ENCODE measurements at regions of chr17 and their contacts with region 1.

Region 1: GRCh38 chr17:49997791-49998703 is 3.0 kb upstream of the DLX3 start:
- DNase-seq: peak; percentile 95
- H3K4me3 Mint-ChIP-seq: peak overlapping the region; percentile 57
- H3K27ac Mint-ChIP-seq: no peak overlapping the region
- H3K4me1 Mint-ChIP-seq: peaks cover 33% of the 10 kb centered on the region
- H3K27me3 Mint-ChIP-seq: peaks cover 84% of the 10 kb centered on the region
- CTCF ChIP-seq: peak; percentile 98

Region 2: DNA sequence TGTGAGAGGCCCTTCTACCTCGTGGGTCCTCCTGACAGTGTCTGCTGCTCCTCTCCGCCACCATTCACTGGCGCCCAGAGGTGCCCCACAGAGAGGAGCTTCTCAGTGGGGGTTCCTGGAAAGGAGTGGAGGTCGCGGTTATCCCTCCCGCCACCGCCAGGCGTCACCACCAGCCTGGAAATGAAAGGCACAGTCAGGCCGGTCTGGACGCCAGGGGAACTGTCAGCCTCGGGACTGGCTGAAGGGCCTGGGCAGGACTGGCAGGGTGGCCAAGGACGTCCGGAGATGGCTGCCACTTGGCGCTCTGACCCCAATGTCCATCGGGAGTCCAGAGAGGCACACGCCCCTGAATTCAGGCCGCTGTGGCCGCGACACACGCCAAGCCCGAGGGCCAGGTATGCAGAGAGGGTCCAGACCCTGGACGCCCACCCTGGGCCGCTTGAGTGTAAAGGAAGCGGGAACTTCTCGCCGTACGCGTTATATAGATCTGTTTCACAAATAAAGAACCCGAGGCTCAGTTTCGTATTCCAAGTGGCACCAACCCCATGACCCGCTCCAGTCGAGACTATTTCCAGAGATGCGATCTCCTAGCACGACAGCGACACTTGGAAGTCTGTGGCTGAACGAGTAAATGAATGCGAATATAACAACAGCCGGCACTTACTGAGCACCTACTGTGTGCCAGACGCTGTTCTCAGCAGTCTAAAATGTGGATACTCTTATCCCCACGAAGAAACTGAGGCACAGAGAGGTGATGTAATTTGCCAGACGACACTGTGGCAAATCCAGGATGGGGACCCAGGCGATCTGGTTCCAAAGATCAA is 430.0 kb before region 1 on chr17:
- CTCF ChIA-PET with region 1: interaction called, 8 read pairs
- intact Hi-C with region 1: loop called (anchors 5 kb)
- DNase-seq: peak; percentile 98
- H3K4me3 Mint-ChIP-seq: peak overlapping the region; percentile 68
- H3K27ac Mint-ChIP-seq: no peak overlapping the region
- H3K4me1 Mint-ChIP-seq: peaks cover 14% of the 10 kb centered on the region
- H3K27me3 Mint-ChIP-seq: peaks cover 64% of the 10 kb centered on the region
- CTCF ChIP-seq: peak; percentile 98

Region 3: DNA sequence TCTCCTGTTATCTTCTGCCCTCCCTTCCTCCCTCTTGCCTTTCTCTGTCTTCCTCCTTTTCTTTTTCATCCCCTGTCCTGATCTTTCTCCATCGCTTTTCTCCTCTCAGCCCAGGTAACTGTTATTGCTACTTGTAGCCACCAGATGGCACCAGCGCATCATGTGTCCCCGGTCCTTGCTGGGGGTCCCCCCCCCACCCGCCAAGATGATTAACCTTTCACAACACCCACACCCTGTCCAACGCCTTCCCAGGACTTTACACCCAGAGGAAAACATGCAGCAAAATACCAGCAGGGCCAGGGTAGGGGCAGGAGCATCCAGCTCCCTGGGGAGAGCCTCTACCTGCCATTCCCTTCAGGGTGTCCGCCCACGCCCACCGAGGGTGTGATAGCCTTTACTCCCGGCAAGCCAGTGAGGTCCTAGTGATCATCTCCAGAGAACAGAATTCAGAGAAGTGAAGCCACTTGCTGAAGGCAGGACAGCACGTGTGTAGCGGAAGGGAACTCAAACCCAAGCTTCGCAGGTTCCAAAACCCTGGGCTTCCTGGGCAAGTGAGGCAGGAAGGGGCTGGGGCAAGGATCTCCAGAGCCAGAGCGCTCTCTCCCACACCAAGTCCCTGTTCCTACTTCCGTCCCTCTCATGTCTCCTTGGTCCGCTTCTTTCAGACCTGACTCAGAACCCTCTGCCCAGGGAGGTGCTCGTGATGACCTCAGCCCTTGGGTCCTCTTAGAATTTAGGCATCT is 136.7 kb before region 1 on chr17:
- CTCF ChIA-PET with region 1: interaction called, 123 read pairs
- intact Hi-C with region 1: loop called (anchors 1 kb)
- DNase-seq: peak; percentile 75
- H3K4me3 Mint-ChIP-seq: no peak overlapping the region
- H3K27ac Mint-ChIP-seq: peak overlapping the region; percentile 20
- H3K4me1 Mint-ChIP-seq: peaks cover 10% of the 10 kb centered on the region
- H3K27me3 Mint-ChIP-seq: peaks cover 62% of the 10 kb centered on the region
- CTCF ChIP-seq: peak; percentile 99

Region 4: DNA sequence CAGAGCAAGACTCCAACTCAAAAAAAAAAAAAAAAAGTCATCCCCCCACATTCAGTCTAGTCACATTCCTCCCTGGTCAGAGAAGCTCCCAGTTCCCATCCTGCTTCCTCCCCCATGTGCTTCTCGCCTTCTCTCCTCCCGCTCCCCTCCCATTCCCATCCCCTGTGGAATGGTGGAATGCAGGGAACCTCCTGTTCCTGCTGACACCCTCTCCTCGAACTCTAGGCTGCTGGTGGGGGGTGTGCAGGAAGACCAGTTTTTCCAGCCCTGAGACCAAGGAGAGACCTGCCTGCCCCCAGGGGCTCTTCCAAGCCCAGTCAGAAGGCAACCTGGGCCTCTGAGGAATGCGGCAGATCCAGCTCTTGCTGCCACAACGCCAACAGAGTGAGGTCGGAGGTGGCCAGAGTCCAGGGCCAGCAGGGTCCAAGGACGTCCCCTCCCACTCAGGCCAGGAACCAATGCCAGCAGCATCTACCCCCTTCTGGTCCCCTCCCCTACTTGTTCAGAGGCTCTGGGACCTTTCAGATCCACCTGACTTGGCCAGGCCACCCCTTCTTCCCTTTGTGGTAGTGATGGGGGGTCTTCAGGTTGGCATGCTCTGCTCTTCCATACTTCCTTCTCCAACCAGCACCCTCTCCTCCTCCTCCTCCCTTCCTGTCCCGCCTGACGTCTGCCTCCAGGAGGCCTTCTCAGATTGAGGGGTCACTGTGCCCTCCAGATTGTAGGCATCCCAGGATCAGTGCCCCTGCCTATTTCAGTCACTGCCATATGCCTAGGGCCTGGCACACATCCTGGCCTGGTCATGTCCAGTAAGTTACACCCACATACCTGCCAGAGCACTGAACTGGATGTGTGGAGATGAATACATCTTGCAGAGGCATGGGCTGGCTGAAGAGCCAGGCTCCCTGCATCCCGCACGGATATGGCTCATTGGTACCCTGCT is 110.7 kb before region 1 on chr17:
- CTCF ChIA-PET with region 1: interaction called, 15 read pairs
- intact Hi-C with region 1: no loop called
- DNase-seq: peak; percentile 92
- H3K4me3 Mint-ChIP-seq: peak overlapping the region; percentile 3
- H3K27ac Mint-ChIP-seq: peak overlapping the region; percentile 36
- H3K4me1 Mint-ChIP-seq: peaks cover 29% of the 10 kb centered on the region
- H3K27me3 Mint-ChIP-seq: peaks cover 12% of the 10 kb centered on the region
- CTCF ChIP-seq: no peak

Region 5: GRCh38 chr17:49952209-49952911 is 45.7 kb before region 1 on chr17:
- CTCF ChIA-PET with region 1: interaction called, 41 read pairs
- intact Hi-C with region 1: loop called (anchors 1 kb)
- DNase-seq: peak; percentile 96
- H3K4me3 Mint-ChIP-seq: no peak overlapping the region
- H3K27ac Mint-ChIP-seq: no peak overlapping the region
- H3K4me1 Mint-ChIP-seq: no peaks in the 10 kb centered on the region
- H3K27me3 Mint-ChIP-seq: peaks cover 87% of the 10 kb centered on the region
- CTCF ChIP-seq: peak; percentile 95

Region 6: DNA sequence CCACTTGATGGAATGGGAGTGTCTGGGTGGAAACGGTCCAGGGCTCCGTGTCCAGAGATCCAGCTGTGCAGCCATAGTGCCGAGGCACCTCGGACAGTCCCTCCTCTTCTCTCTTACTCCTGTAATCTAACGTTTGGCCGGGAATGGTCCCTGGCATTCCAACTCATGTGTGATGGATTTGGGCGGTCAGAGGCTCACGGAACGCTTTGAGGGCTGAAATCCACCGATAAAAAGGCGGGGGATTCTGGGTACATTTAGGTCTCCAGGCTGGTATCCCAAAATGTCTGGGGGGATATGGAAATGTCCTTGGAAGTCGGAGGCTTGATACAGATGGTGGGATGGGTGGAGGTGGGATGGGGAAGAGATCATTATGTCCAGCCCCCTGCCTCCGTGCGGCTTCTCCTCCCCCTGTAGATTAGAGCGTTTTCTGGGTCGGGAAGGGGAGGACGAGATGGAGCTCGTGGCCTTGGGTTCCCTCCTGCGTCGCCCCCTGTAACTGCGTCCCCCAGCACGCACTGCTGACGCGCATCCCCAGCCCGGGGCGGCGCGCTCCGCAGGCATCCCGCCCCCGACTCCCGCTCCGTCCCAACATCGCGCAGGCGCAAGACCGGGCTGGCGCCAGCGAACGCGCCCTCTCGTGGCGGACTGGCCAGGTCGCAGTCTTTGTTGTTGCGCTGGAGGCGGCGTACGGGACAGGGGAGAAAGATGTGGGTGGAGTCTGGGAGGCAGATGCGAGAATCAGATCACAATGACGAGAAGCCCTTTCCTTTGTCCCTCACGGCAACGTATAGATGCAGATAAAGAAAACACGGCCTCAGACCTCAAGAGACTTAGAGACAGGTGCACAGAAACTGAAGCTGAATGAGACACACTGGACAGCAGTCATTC is 163.2 kb after region 1 on chr17:
- CTCF ChIA-PET with region 1: no interaction called
- intact Hi-C with region 1: no loop called
- DNase-seq: peak; percentile 97
- H3K4me3 Mint-ChIP-seq: peak overlapping the region; percentile 75
- H3K27ac Mint-ChIP-seq: peak overlapping the region; percentile 6
- H3K4me1 Mint-ChIP-seq: peaks cover 18% of the 10 kb centered on the region
- H3K27me3 Mint-ChIP-seq: peaks cover 59% of the 10 kb centered on the region
- CTCF ChIP-seq: peak; percentile 81

Region 7: GRCh38 chr17:50312308-50312707 is 314.3 kb after region 1 on chr17:
- CTCF ChIA-PET with region 1: no interaction called
- intact Hi-C with region 1: no loop called
- DNase-seq: no peak
- H3K4me3 Mint-ChIP-seq: no peak overlapping the region
- H3K27ac Mint-ChIP-seq: no peak overlapping the region
- H3K4me1 Mint-ChIP-seq: no peaks in the 10 kb centered on the region
- H3K27me3 Mint-ChIP-seq: peaks cover 54% of the 10 kb centered on the region
- CTCF ChIP-seq: no peak

Measured in Calu3 (cell line).